Right ventricle myocardium inferior (tissue), 1 donor: ENCODE measurements at regions of chr6 and their contacts with region 1.

Region 1: GRCh38 chr6:19804205-19805123 is 32.7 kb upstream of the ID4 start:
- DNase-seq: peak; percentile 96
- ATAC-seq: peak; percentile 99

Region 2: GRCh38 chr6:19836799-19837510 is 32.5 kb after region 1 on chr6 and contains the start of gene ID4:
- intact Hi-C with region 1: loop called (anchors 2 kb)
- DNase-seq: peak; percentile 94
- ATAC-seq: peak; percentile 97
- total RNA-seq, gene ID4: 1.6 TPM